Natural killer cell (primary cell): ENCODE measurements at regions of chr14 and their contacts with region 1.

Region 1: DNA sequence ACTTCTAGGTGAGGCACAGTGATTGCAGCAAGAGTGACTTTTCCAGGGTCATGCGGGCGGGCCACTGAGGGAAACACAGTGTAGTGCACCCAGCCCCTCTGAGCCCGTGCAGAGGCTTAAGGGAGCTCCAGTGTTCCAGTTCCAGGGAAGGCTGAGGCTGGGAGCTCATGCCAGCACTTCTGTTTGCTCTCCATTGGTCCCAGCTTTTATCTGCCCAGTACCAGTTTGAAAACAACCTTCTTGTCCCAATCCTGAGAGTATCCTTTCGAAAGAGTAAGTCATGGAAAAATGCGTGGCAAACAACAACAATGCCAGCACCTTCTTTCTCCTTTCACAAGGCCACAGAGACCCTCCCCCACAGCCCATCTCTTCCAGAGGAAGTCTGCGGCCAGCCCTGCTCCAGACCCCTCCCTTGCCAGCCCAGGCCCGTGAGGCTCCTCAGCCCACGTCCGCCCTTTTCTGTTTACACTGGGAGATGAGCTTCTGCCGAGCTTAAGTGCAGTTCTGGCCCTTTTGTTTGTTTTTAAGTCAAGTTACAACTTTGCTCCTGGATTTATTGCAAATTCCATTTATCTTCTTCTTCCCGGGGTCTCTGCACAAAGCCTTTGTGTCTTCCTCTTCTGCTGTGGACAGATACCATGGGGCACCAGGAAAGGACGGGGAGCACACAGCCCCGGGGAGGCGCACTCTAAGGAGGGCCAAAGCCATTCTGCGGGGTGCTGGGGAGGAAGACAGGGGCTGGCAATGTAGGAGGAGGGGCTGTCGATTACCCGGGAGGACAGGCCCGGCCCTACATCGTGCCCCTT is 185.6 kb downstream of the ZFP36L1 start:
- DNase-seq: no peak
- ATAC-seq: peak in 2 of 3 donors; percentile 24 to 59
- H3K4me3 ChIP-seq: no peak overlapping the region
- H3K4me3 Mint-ChIP-seq: peak overlapping the region; percentile 75
- H3K27ac ChIP-seq: peak overlapping the region; percentile 46
- H3K27ac Mint-ChIP-seq: peak overlapping the region; percentile 81
- H3K4me1 ChIP-seq: peaks cover 28% of the 10 kb centered on the region
- H3K4me1 Mint-ChIP-seq: peaks cover 16 to 18% of the 10 kb centered on the region in 2 donors
- H3K27me3 ChIP-seq: no peaks in the 10 kb centered on the region
- H3K27me3 Mint-ChIP-seq: no peaks in the 10 kb centered on the region
- CTCF ChIP-seq: no peak

Region 2: DNA sequence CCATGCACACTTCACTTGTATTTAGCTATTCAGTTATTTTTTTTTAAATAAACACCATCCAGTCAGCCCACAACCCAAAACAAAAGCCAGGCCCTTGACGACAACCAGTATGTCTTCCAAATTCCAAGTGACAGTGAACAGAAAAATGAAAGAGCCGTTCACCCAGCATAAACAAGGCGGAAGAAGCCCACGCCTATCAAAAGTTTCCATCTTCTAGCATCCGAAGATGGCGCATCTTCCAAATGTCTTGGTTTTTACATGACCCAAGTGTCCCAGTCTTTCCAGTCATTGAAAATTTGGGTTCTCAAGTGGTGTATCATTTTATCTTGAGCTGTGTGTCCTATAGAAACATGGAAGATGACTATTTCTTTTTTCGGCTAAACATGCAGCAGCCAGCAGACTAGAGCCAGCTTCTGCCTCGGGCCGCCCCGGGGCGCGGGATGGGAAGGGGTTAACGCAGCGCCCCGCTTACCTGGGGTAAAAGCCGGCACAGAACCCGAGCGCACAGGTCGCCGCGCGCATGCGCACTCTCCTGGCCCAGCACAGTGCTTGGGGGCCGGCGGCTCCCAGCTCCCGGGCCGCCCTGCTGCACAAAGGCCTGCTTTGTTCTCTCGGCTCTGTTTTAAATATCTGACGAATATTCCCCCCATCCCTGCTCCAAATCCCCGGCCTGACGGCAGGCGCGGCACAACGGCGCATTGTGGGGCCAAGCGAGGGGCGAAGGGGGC is 20.8 kb after region 1 on chr14:
- intact Hi-C with region 1: loop called (anchors 1 kb)
- DNase-seq: peak; percentile 39 to 85
- ATAC-seq: peak; percentile 13 to 68 (median 63)
- H3K4me3 ChIP-seq: peak overlapping the region; percentile 36
- H3K4me3 Mint-ChIP-seq: peak overlapping the region; percentile 86
- H3K27ac ChIP-seq: peak overlapping the region; percentile 12
- H3K27ac Mint-ChIP-seq: peak overlapping the region in 1 of 2 donors; percentile 86
- H3K4me1 ChIP-seq: peaks cover 25% of the 10 kb centered on the region
- H3K4me1 Mint-ChIP-seq: peaks cover 13 to 19% of the 10 kb centered on the region in 2 donors
- H3K27me3 ChIP-seq: no peaks in the 10 kb centered on the region
- H3K27me3 Mint-ChIP-seq: peaks cover 8 to 13% of the 10 kb centered on the region in 2 donors
- CTCF ChIP-seq: no peak